Adrenal gland (tissue), 19 donors: ENCODE measurements at regions of chr2 and their contacts with region 1.

Region 1: GRCh38 chr2:152335010-152335725 is at the start of gene FMNL2:
- DNase-seq: peak; percentile 84 to 91 (median 89)
- H3K4me3 ChIP-seq: peak within 1 kb of the TSS; percentile 79 to 97 (median 92)
- H3K27ac ChIP-seq: peak within 1 kb of the TSS; percentile 48 to 89 (median 78)
- H3K4me1 ChIP-seq: peaks cover 0 to 16% of the 10 kb centered on the region in 2 donors
- H3K27me3 ChIP-seq: no peaks in the 10 kb centered on the region
- CTCF ChIP-seq: peak in 1 of 6 experiments; percentile 13
- POLR2A ChIP-seq: peak; percentile 66 to 84
- total RNA-seq, gene FMNL2: 23.5 to 51.6 (median 34.2) TPM

Region 2: DNA sequence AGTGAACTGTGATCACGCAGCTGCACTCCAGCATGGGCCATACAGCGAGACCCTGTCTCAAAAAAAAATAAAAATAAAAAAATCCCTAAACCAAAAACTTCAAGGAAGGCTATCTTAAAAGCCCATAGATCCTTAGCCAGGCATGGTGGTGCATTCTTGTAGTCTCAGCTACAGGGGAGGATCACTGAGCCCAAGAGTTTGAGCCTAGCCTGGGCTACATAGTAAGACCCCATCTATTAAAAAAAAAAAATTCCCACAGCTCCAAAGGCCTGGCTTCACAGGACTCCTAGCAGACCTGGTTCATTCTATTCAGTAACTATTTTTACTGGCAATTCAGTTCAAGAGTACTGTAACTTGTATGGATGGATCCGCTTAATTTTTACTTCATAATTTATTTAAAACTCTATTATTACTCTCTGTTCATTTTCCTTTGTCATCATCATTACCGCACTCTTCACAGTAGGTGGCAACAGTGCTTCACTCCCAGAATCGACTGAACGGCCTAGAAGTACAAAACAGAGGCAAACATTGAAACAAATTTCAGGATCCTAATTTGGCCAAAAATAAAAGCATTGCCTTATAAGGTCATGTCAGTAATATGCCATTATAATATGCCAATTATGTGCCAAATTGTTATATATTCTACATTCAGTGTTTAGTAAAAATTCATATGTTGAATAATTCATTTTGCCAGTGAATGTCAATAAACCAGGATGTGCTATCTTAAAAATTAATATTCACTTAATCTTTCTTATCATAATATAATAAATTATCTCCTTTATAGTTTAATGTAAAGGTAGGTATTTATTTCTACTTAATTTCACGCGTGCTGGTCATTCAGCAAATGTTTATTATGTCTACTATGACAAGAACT is 145.3 kb before region 1 on chr2:
- intact Hi-C with region 1: loop called in 1 of 2 experiments (anchors 10 kb)
- DNase-seq: peak; percentile 50 to 78 (median 59)
- H3K4me3 ChIP-seq: no peak overlapping the region
- H3K27ac ChIP-seq: no peak overlapping the region
- H3K4me1 ChIP-seq: no peaks in the 10 kb centered on the region
- H3K27me3 ChIP-seq: no peaks in the 10 kb centered on the region
- CTCF ChIP-seq: peak; percentile 44 to 89 (median 86)
- POLR2A ChIP-seq: no peak

Region 3: GRCh38 chr2:152627351-152627957 is 292.3 kb after region 1 on chr2:
- intact Hi-C with region 1: loop called (anchors 10 kb)
- DNase-seq: peak in 1 of 7 donors; percentile 6
- H3K4me3 ChIP-seq: no peak overlapping the region
- H3K27ac ChIP-seq: no peak overlapping the region
- H3K4me1 ChIP-seq: peaks cover 10 to 22% of the 10 kb centered on the region in 2 donors
- H3K27me3 ChIP-seq: no peaks in the 10 kb centered on the region
- CTCF ChIP-seq: peak; percentile 37 to 81 (median 67)
- POLR2A ChIP-seq: no peak

Region 4: GRCh38 chr2:152635635-152636298 is 300.6 kb after region 1 on chr2:
- intact Hi-C with region 1: loop called in 1 of 2 experiments (anchors 10 kb)
- DNase-seq: peak; percentile 45 to 84 (median 69)
- H3K4me3 ChIP-seq: no peak overlapping the region
- H3K27ac ChIP-seq: no peak overlapping the region
- H3K4me1 ChIP-seq: no peaks in the 10 kb centered on the region
- H3K27me3 ChIP-seq: no peaks in the 10 kb centered on the region
- CTCF ChIP-seq: peak; percentile 71 to 85 (median 81)
- POLR2A ChIP-seq: no peak